ENCODE measurements at regions of chr7 and their contacts with region 1.

Region 1: GRCh38 chr7:18895456-18895855 is 222.0 kb downstream of the TWIST1 start:
- DNase-seq: peak; percentile 10 to 85
- H3K4me3 ChIP-seq: peak overlapping the region; percentile 34
- H3K27ac ChIP-seq: peak overlapping the region; percentile 69
- H3K4me1 ChIP-seq: peaks cover 29% of the 10 kb centered on the region
- H3K27me3 ChIP-seq: no peaks in the 10 kb centered on the region
- CTCF ChIP-seq: no peak

Region 2: GRCh38 chr7:19060761-19061259 is 165.4 kb after region 1 on chr7:
- CTCF ChIA-PET with region 1: no interaction called
- POLR2A ChIA-PET with region 1: no interaction called
- intact Hi-C with region 1: loop called (anchors 10 kb)
- DNase-seq: peak in 1 of 2 experiments; percentile 41
- H3K4me3 ChIP-seq: no peak overlapping the region
- H3K27ac ChIP-seq: no peak overlapping the region
- H3K4me1 ChIP-seq: no peaks in the 10 kb centered on the region
- H3K27me3 ChIP-seq: no peaks in the 10 kb centered on the region
- CTCF ChIP-seq: no peak

Region 3: GRCh38 chr7:19146699-19147098 is 251.2 kb after region 1 on chr7:
- CTCF ChIA-PET with region 1: no interaction called
- POLR2A ChIA-PET with region 1: no interaction called
- intact Hi-C with region 1: no loop called
- DNase-seq: no peak
- H3K4me3 ChIP-seq: no peak overlapping the region
- H3K27ac ChIP-seq: no peak overlapping the region
- H3K4me1 ChIP-seq: no peaks in the 10 kb centered on the region
- H3K27me3 ChIP-seq: peaks cover 9% of the 10 kb centered on the region; the same call in 1 of the 2 replicates
- CTCF ChIP-seq: no peak